H1 (cell line): ENCODE measurements at regions of chr9 and their contacts with region 1.

Region 1: DNA sequence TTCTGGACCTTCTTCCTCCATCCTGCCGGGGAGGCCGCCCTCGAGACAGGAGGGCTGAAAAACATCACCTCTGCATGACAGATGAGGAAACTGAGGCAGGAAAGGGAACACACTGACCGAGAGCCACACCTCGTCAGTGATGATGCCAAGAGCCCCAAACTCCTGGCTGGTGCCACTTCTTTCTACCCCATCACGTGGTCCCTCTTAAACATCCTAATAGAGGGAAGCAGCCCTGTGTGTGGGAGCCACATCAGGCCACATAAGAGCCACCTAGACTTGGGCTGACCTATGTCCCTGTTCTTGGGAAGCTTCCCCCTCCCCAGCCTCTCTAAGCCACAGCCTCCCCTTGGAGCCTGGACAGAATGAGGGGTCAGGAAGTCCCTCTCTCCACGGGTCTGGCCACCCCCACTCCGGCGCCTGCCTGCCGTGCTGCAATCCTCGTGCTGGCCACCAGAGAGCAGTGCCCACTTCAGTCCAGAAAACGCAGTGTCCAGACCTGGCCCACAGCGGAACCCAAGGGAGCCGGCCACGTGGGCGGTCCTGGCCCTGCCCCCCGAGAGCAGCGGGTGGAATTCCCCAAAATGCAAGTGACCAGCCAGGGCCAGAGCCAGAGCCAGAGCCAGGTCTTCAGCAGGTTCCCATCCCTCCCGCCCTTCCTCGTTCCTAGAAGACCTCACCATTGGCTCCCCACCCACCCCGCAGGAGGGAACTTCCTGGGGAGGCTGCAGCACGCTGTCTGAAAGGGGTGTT is 54.7 kb upstream of the SARDH start:
- DNase-seq: peak in 1 of 2 experiments; percentile 90
- H3K4me3 ChIP-seq: no peak overlapping the region
- H3K27ac ChIP-seq: no peak overlapping the region
- H3K4me1 ChIP-seq: peaks cover 0 to 9% (median 3%) of the 10 kb centered on the region in 4 experiments; a peak in 6 of 7 replicates
- H3K27me3 ChIP-seq: no peaks in the 10 kb centered on the region
- CTCF ChIP-seq: peak in 2 of 3 experiments; percentile 90 to 92; a peak in 3 of 4 replicates
- EP300 ChIP-seq: no peak
- POLR2A ChIP-seq: no peak
- RAD21 ChIP-seq: peak; percentile 88 to 91

Region 2: GRCh38 chr9:133686642-133687575 is 106.0 kb before region 1 on chr9:
- CTCF ChIA-PET with region 1: no interaction called
- POLR2A ChIA-PET with region 1: no interaction called
- DNase-seq: no peak
- H3K4me3 ChIP-seq: no peak overlapping the region
- H3K27ac ChIP-seq: no peak overlapping the region
- H3K4me1 ChIP-seq: no peaks in the 10 kb centered on the region; a peak in 1 of 7 replicates
- H3K27me3 ChIP-seq: no peaks in the 10 kb centered on the region
- CTCF ChIP-seq: no peak
- EP300 ChIP-seq: no peak
- POLR2A ChIP-seq: no peak
- RAD21 ChIP-seq: no peak

Region 3: GRCh38 chr9:133762488-133763271 is 30.2 kb before region 1 on chr9:
- CTCF ChIA-PET with region 1: no interaction called
- POLR2A ChIA-PET with region 1: no interaction called
- DNase-seq: peak in 1 of 2 experiments; percentile 39
- H3K4me3 ChIP-seq: no peak overlapping the region
- H3K27ac ChIP-seq: no peak overlapping the region
- H3K4me1 ChIP-seq: no peaks in the 10 kb centered on the region; a peak in 1 of 7 replicates
- H3K27me3 ChIP-seq: no peaks in the 10 kb centered on the region; a peak in 1 of 7 replicates
- CTCF ChIP-seq: no peak
- EP300 ChIP-seq: no peak
- POLR2A ChIP-seq: no peak
- RAD21 ChIP-seq: no peak

Region 4: GRCh38 chr9:133803028-133803585 is 10.2 kb after region 1 on chr9:
- CTCF ChIA-PET with region 1: interaction called, 37 read pairs
- POLR2A ChIA-PET with region 1: no interaction called
- DNase-seq: no peak
- H3K4me3 ChIP-seq: no peak overlapping the region
- H3K27ac ChIP-seq: no peak overlapping the region
- H3K4me1 ChIP-seq: no peaks in the 10 kb centered on the region; a peak in 1 of 7 replicates
- H3K27me3 ChIP-seq: no peaks in the 10 kb centered on the region
- CTCF ChIP-seq: no peak
- EP300 ChIP-seq: no peak
- POLR2A ChIP-seq: no peak
- RAD21 ChIP-seq: no peak

Region 5: GRCh38 chr9:133813749-133814585 is 21.1 kb after region 1 on chr9:
- CTCF ChIA-PET with region 1: interaction called, 23 read pairs
- POLR2A ChIA-PET with region 1: no interaction called
- DNase-seq: no peak
- H3K4me3 ChIP-seq: no peak overlapping the region
- H3K27ac ChIP-seq: no peak overlapping the region
- H3K4me1 ChIP-seq: no peaks in the 10 kb centered on the region
- H3K27me3 ChIP-seq: no peaks in the 10 kb centered on the region
- CTCF ChIP-seq: no peak
- EP300 ChIP-seq: no peak
- POLR2A ChIP-seq: no peak
- RAD21 ChIP-seq: no peak

Region 6: DNA sequence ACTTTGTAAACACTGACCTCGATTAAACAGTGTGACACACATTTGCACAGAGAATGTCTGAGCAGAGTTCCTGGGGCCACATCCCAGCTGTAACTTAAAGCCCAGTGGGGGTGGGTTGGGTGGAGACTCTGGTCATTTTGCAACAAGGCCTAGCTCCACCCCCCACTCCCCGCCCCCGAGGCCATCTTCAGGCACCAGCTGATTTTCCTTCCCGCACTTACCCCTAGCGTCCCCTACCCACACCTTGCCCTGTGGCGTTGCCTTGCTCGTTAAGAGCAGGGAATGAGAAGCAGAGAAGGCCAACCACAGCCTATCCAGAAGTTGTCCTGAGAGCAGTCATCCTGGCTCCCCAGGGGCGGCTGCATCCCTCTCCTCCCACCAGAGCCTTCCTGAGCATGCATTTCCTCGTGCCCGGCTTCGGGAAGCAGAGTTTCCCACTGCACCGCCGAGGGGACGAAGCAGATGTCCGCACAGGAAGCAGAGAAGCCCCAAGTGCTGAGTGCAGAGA is 47.0 kb after region 1 on chr9:
- CTCF ChIA-PET with region 1: interaction called, 10 read pairs
- POLR2A ChIA-PET with region 1: no interaction called
- DNase-seq: no peak
- H3K4me3 ChIP-seq: no peak overlapping the region
- H3K27ac ChIP-seq: 0 out of 2 replicates have a peak overlapping the region, but pooled peaks have one; percentile 10
- H3K4me1 ChIP-seq: peaks cover 0 to 32% (median 22%) of the 10 kb centered on the region in 4 experiments; a peak in 6 of 7 replicates
- H3K27me3 ChIP-seq: no peaks in the 10 kb centered on the region
- CTCF ChIP-seq: no peak
- EP300 ChIP-seq: no peak
- POLR2A ChIP-seq: no peak
- RAD21 ChIP-seq: no peak